ENCODE measurements at regions of chr13 and their contacts with region 1.

Region 1: DNA sequence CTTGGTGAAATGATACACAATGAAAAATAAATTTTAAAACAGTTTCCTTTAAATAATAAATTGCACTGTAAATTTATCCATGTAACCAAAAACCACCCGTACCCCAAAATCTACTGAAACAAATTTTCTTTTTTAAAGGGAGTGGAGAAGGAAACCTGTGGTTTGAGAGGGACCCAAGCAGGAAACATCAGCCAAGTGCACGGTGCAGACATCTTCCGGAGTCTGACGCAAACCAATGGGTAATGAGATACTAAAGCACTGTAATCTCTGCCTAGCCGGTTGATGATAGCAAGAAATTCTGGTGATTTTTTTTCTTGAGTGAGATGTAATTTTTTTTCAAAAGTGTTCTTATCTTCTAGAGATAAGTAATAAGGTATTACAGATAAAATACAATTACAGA is 115.4 kb downstream of the ABCC4 start:
- DNase-seq: no peak
- ATAC-seq: no peak

Region 2: GRCh38 chr13:95403828-95404522 is 218.1 kb after region 1 on chr13:
- intact Hi-C with region 1: loop called (anchors 5 kb)
- DNase-seq: peak; percentile 87
- ATAC-seq: peak; percentile 96